GM10248 (cell line): ENCODE measurements at regions of chr18 and their contacts with region 1.

Region 1: GRCh38 chr18:36688020-36688965 is 140.5 kb downstream of the TPGS2 start:
- DNase-seq: peak; percentile 64
- CTCF ChIP-seq: peak; percentile 76

Region 2: DNA sequence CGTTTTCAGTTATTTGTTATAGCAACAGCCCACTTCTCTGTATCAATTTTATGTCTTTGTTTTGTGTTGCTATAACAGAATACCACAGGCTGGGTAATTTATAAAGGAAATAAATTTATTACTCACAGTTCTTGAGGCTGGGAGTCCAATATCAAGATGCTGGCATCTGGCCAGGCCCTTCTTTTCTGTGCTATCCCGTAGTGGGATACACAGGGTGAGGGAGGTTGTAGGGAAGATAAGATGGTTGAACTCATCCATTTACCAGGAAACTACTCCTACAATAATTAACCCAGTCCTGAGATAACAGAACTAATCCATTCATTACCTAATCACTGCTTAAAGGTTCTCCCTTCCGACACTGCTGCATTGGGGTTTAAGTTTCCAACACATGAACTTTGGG is 80.2 kb before region 1 on chr18:
- CTCF ChIA-PET with region 1: no interaction called
- POLR2A ChIA-PET with region 1: no interaction called
- DNase-seq: no peak
- CTCF ChIP-seq: no peak

Region 3: GRCh38 chr18:36655930-36656329 is 32.4 kb before region 1 on chr18:
- CTCF ChIA-PET with region 1: interaction called, 15 read pairs
- POLR2A ChIA-PET with region 1: no interaction called
- DNase-seq: no peak
- CTCF ChIP-seq: no peak

Region 4: DNA sequence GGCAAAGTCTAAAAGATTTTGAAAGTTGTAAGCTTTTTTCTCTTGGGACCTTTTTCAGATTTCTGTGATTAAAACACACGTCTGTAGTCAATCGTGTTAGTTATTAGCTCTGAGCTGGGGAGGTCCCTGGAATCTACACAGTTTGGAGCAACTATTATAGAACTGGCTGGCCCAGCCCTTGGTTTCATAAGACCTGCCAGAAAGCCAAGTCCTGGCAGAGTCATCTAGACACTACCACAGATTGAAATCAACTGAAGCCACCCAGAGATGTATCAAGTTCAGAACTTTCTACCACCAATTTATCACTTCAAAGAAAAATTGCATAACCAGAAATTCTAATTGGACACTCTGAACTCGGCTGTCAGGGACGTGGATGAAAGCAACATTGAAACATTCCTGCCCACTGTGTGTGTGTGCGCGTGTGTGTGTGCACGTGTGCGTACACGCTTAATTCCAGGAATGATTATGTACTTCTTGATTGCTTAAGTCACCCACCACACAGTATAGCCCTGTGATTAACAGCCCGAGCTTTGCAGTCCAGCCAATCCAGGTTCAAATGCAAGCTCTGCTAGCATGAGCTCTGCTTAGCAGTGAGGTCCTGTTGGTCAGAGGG is 14.2 kb after region 1 on chr18:
- CTCF ChIA-PET with region 1: interaction called, 15 read pairs
- POLR2A ChIA-PET with region 1: no interaction called
- DNase-seq: no peak
- CTCF ChIP-seq: no peak

Region 5: GRCh38 chr18:36733150-36733549 is 44.9 kb after region 1 on chr18:
- CTCF ChIA-PET with region 1: interaction called, 18 read pairs
- POLR2A ChIA-PET with region 1: no interaction called
- DNase-seq: no peak
- CTCF ChIP-seq: no peak

Region 6: GRCh38 chr18:36772241-36772723 is 84.0 kb after region 1 on chr18:
- CTCF ChIA-PET with region 1: no interaction called
- POLR2A ChIA-PET with region 1: no interaction called
- DNase-seq: no peak
- CTCF ChIP-seq: no peak

Region 7: DNA sequence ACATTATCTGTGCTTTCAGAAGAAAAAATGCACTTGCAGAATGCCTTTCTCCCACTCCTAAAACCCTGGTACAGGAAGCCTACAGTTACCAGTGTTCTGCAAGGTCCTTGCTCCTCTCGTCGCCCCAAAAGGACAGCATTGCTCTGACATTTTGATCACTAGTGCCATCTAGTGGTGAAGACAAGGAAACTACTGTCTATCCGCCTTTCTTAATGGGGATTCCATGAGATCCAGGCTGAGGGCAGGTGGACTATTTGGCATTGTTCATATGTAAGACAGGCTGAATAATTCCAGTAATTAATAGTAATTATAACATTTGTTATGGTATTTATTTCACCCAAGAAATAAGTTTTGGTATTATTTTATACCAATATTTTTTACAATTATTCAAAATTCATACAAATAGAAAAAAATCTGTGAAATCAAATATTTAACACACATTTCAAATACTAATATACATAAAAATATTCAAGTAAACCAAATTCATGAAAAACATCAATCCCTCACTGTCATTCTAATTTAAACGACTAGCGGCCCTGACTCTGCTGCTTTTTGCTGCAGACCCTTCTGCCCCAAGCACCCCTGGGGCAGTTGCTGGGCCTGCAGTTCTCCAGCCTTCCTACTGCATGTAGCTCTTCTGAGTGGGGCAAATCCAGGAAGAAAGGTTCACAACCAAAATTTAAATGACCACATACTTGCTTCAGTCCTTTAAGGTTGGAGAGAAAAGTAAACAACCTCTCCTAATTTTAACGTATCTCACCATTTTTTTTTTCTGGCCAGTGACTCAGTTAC is 121.5 kb after region 1 on chr18:
- CTCF ChIA-PET with region 1: interaction called, 37 read pairs
- POLR2A ChIA-PET with region 1: no interaction called
- DNase-seq: peak; percentile 76
- CTCF ChIP-seq: peak; percentile 74